ENCODE measurements at regions of chr9 and their contacts with region 1.

Region 1: GRCh38 chr9:88106491-88106890 is 31.8 kb downstream of the SPATA31C2 start:
- DNase-seq: no peak
- ATAC-seq: peak; percentile 66

Region 2: GRCh38 chr9:87322840-87323635 is 783.5 kb before region 1 on chr9:
- intact Hi-C with region 1: no loop called
- DNase-seq: no peak
- ATAC-seq: peak; percentile 26

Region 3: GRCh38 chr9:87944096-87944495 is 162.4 kb before region 1 on chr9:
- intact Hi-C with region 1: loop called (anchors 10 kb)
- DNase-seq: no peak
- ATAC-seq: no peak

Region 4: GRCh38 chr9:88143180-88143579 is 36.7 kb after region 1 on chr9:
- intact Hi-C with region 1: no loop called
- DNase-seq: no peak
- ATAC-seq: no peak